ENCODE measurements at regions of chr3 and their contacts with region 1.

Region 1: GRCh38 chr3:124860599-124860998 is 26.6 kb downstream of the ITGB5 start:
- DNase-seq: peak; percentile 77
- H3K4me3 Mint-ChIP-seq: peak overlapping the region; percentile 2
- H3K27ac Mint-ChIP-seq: peak overlapping the region; percentile 37
- H3K4me1 Mint-ChIP-seq: peaks cover 52% of the 10 kb centered on the region
- H3K27me3 Mint-ChIP-seq: no peaks in the 10 kb centered on the region
- CTCF ChIP-seq: no peak

Region 2: GRCh38 chr3:124492811-124493210 is 367.8 kb before region 1 on chr3:
- CTCF ChIA-PET with region 1: no interaction called
- intact Hi-C with region 1: no loop called
- DNase-seq: peak; percentile 84
- H3K4me3 Mint-ChIP-seq: no peak overlapping the region
- H3K27ac Mint-ChIP-seq: no peak overlapping the region
- H3K4me1 Mint-ChIP-seq: no peaks in the 10 kb centered on the region
- H3K27me3 Mint-ChIP-seq: peaks cover 84% of the 10 kb centered on the region
- CTCF ChIP-seq: peak; percentile 38

Region 3: GRCh38 chr3:124878561-124879336 is 18.1 kb after region 1 on chr3:
- CTCF ChIA-PET with region 1: interaction called, 5 read pairs
- intact Hi-C with region 1: loop called (anchors 1 kb)
- DNase-seq: peak; percentile 72
- H3K4me3 Mint-ChIP-seq: peak overlapping the region; percentile 29
- H3K27ac Mint-ChIP-seq: peak overlapping the region; percentile 83
- H3K4me1 Mint-ChIP-seq: peaks cover 69% of the 10 kb centered on the region
- H3K27me3 Mint-ChIP-seq: no peaks in the 10 kb centered on the region
- CTCF ChIP-seq: no peak

Region 4: GRCh38 chr3:126197854-126198584 is 1337.4 kb after region 1 on chr3:
- CTCF ChIA-PET with region 1: no interaction called
- intact Hi-C with region 1: no loop called
- DNase-seq: peak; percentile 89
- H3K4me3 Mint-ChIP-seq: no peak overlapping the region
- H3K27ac Mint-ChIP-seq: no peak overlapping the region
- H3K4me1 Mint-ChIP-seq: peaks cover 15% of the 10 kb centered on the region
- H3K27me3 Mint-ChIP-seq: no peaks in the 10 kb centered on the region
- CTCF ChIP-seq: peak; percentile 80